HepG2 (cell line): ENCODE measurements at regions of chr9 and their contacts with region 1.

Region 1: DNA sequence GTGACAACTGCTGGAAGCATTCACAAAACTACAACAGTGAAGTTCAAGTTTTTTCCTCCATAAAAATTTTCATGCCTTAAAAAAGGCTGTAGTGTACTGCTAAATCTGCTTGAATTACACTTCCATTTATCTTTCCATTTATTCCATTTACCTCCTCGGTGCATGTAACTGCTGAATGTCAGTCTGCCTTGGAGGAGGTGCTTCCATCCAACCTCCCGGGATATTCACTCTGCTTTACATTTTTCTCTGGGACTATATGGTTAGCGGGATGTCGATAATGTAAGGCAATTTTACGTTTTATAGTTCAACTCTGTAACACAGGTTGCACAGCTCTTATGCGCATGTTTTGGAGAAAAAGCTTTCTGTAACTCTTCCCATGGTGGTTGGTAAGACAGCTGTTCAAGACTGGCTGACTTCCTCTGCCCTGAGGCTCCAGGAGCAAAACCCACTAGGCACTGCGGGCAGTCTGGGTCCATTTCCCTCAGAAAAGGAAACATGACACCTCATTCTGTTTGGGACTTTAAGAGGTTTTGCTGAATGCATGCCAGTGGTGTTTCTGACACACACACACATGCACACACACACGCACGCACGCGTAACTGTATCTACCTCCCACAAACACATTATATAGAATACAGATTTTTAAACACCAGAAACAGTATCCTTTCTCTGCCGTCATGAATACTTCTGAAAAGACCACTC is 66.1 kb downstream of the SPTLC1 start:
- DNase-seq: no peak
- ATAC-seq: no peak
- H3K4me3 ChIP-seq: no peak overlapping the region
- H3K27ac ChIP-seq: no peak overlapping the region
- H3K4me1 ChIP-seq: no peaks in the 10 kb centered on the region
- H3K27me3 ChIP-seq: no peaks in the 10 kb centered on the region
- CTCF ChIP-seq: no peak
- EP300 ChIP-seq: no peak
- POLR2A ChIP-seq: no peak
- RAD21 ChIP-seq: no peak

Region 2: DNA sequence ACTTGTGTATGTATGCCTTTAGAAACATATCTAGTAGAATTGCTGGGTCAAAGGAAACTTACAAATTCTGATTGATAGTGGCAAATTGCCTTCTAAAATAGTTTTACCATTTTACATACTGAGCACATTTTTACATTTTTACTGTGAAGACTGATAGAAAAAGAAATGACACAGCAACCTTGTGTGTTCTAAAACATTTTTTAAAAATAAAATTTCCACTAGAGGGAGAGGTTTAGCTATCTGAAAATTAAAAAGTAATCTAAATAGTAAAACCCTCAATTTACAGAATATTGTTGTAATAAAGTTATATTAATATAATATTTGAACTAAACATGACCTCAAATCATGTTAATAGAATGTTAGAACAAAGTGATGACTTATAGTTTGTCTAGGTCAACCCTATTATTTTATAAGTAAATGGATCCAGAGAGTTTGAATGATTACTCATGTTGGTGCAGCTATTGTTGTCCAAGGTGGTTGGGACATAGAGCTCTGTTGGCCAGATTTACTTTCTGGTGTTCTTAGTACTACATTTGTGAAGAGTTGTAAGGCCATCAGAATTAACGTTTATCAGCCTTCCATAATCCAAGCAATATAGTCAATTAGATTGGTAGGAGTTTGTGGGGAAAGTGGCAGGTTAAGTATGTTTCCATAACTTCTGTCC is 293.9 kb after region 1 on chr9:
- CTCF ChIA-PET with region 1: no interaction called
- POLR2A ChIA-PET with region 1: no interaction called
- in situ Hi-C with region 1: no loop called
- intact Hi-C with region 1: loop called (anchors 10 kb)
- DNase-seq: no peak
- ATAC-seq: no peak
- H3K4me3 ChIP-seq: no peak overlapping the region
- H3K27ac ChIP-seq: no peak overlapping the region
- H3K4me1 ChIP-seq: no peaks in the 10 kb centered on the region
- H3K27me3 ChIP-seq: no peaks in the 10 kb centered on the region
- CTCF ChIP-seq: no peak
- EP300 ChIP-seq: no peak
- POLR2A ChIP-seq: no peak
- RAD21 ChIP-seq: no peak